MCF 10A (cell line): ENCODE measurements at regions of chr5 and their contacts with region 1.

Region 1: GRCh38 chr5:177546258-177546741 is 8.1 kb downstream of the FAM193B start:
- DNase-seq: peak; percentile 100
- H3K4me3 Mint-ChIP-seq: peak overlapping the region; percentile 59
- H3K27ac Mint-ChIP-seq: peak overlapping the region; percentile 97
- H3K4me1 Mint-ChIP-seq: peaks cover 51% of the 10 kb centered on the region
- H3K27me3 Mint-ChIP-seq: no peaks in the 10 kb centered on the region
- CTCF ChIP-seq: no peak

Region 2: GRCh38 chr5:176875783-176876505 is 670.4 kb before region 1 on chr5:
- CTCF ChIA-PET with region 1: no interaction called
- POLR2A ChIA-PET with region 1: no interaction called
- intact Hi-C with region 1: no loop called
- DNase-seq: no peak
- H3K4me3 Mint-ChIP-seq: no peak overlapping the region
- H3K27ac Mint-ChIP-seq: no peak overlapping the region
- H3K4me1 Mint-ChIP-seq: no peaks in the 10 kb centered on the region
- H3K27me3 Mint-ChIP-seq: peaks cover 57% of the 10 kb centered on the region
- CTCF ChIP-seq: no peak

Region 3: DNA sequence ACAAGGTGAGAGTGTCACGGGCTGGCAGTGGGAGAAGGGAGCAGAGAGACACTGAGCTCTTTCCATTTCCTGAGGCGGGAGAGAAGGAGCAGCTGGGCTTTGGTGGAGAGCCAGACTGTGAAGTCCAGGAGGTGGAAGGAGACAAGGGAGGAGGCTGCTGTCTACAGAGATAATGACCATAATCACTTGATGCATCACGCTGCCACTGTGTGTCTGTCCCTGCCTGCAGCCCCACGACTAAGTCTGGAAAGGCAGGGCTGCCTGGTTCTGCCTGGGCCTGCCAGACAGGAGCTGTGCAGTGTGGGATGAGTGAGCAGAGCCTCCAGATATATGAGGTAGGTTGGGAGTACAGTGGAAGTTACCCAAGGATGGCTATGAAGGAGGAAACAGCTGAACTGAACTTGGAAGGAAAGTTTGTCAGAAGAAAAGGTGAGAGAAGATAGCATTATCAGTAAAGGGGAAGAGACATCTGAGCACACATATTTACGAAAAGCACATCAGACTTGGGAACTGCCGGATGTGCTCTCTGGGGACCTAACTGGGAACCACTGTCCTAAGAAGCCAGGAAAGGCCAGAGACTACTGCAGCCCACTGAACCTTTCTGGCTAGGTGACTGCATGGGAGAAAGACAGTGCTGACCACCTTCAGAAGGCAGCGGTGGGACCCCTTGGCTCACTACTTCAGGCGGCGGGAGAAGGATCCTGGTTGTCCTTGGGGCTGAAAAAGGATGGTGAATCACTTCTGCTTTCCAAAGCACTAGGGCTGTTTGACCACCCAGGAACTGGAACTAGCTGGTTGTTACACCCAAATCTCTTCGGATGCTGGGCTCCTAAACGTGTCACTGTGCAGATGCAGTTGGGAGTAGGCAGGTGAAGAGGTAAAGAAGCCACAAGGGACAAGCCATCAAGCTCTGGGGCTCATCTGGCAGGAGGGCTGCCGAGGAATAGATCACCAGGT is 16.8 kb before region 1 on chr5:
- CTCF ChIA-PET with region 1: interaction called, 5 read pairs
- POLR2A ChIA-PET with region 1: interaction called, 14 read pairs
- intact Hi-C with region 1: no loop called
- DNase-seq: no peak
- H3K4me3 Mint-ChIP-seq: no peak overlapping the region
- H3K27ac Mint-ChIP-seq: no peak overlapping the region
- H3K4me1 Mint-ChIP-seq: no peaks in the 10 kb centered on the region
- H3K27me3 Mint-ChIP-seq: no peaks in the 10 kb centered on the region
- CTCF ChIP-seq: no peak

Region 4: DNA sequence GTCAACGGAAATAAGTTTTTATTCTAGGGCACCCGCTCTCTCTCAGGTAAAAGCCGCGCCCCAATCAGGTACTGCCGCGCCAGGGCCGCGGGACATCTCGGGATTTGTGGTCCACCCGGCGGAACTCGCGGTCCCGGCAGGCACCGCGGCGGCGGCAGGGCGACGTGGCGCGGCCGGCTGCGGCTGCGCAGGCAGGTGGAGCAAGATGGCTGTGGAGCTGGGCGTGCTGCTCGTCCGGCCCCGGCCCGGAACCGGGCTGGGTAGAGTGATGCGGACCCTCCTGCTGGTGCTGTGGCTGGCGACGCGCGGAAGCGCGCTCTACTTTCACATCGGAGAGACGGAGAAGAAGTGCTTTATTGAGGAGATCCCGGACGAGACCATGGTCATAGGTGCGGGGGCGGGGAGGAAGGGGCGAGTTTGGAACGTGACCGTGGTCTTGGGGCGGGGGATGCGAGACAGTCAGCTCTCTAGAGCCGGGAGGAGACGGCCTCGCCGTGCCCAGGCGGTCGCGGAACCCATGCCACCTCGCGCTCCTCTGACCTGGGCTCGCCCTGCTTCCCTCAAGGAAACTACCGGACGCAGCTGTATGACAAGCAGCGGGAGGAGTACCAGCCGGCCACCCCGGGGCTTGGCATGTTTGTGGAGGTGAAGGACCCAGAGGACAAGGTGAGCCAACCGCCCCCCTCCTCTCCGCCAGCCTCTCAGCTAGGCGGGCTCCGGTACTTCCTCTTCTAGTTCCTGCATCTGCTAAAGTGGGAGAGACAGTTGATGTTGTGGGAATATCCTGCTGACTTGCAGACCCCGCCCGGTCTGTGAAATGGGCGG is 45.9 kb after region 1 on chr5 and contains the start of gene TMED9:
- CTCF ChIA-PET with region 1: no interaction called
- POLR2A ChIA-PET with region 1: interaction called, 55 read pairs
- intact Hi-C with region 1: loop called (anchors 5 kb)
- DNase-seq: peak; percentile 86
- H3K4me3 Mint-ChIP-seq: peak within 1 kb of the TSS; percentile 85
- H3K27ac Mint-ChIP-seq: peak within 1 kb of the TSS; percentile 96
- H3K4me1 Mint-ChIP-seq: peaks cover 7% of the 10 kb centered on the region
- H3K27me3 Mint-ChIP-seq: peaks cover 36% of the 10 kb centered on the region
- CTCF ChIP-seq: no peak
- total RNA-seq, gene TMED9: 301 and 365 TPM in 2 replicates

Region 5: DNA sequence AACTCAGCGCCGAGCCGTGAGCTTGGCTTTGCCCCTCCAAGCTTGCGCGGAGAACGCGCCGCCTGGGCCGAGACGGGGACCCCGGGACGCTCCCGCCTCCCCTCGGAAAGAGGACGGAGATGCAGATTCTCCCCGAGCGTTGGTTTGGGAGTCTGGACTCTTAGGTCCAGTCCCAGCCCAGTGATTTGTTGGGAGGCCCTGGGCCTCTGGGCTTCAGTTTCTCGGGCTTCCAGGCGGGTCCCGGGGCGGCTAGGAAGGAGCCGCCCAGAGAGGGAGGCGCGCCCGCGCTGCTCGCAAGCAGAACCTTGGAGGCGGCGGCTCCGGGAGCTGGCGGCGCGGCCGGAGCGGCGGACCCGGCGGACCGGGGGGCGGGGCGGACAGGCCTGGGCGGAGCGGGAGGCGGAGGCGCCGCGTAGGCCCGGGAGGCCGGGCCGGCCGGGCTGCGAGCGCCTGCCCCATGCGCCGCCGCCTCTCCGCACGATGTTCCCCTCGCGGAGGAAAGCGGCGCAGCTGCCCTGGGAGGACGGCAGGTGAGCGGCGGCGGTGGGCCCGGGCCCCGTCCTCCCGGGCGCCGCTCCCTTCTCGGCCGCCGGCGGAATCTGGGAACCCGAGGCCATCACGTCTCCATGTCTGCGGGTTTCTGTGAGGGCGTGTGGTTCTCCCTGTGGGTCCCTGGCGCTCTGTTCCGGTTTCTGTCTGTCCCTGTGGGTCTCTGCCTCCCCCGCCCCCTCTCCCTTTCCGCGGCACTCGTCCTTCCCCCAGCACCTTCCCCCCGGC is 53.6 kb after region 1 on chr5 and contains the start of gene B4GALT7:
- CTCF ChIA-PET with region 1: interaction called, 4 read pairs
- POLR2A ChIA-PET with region 1: interaction called, 36 read pairs
- intact Hi-C with region 1: no loop called
- DNase-seq: peak; percentile 85
- H3K4me3 Mint-ChIP-seq: peak within 1 kb of the TSS; percentile 85
- H3K27ac Mint-ChIP-seq: peak within 1 kb of the TSS; percentile 93
- H3K4me1 Mint-ChIP-seq: peaks cover 35% of the 10 kb centered on the region
- H3K27me3 Mint-ChIP-seq: no peaks in the 10 kb centered on the region
- CTCF ChIP-seq: no peak
- total RNA-seq, gene B4GALT7: 37.9 and 38.8 TPM in 2 replicates